Sigmoid colon (tissue), 7 donors: ENCODE measurements at regions of chr6 and their contacts with region 1.

Region 1: DNA sequence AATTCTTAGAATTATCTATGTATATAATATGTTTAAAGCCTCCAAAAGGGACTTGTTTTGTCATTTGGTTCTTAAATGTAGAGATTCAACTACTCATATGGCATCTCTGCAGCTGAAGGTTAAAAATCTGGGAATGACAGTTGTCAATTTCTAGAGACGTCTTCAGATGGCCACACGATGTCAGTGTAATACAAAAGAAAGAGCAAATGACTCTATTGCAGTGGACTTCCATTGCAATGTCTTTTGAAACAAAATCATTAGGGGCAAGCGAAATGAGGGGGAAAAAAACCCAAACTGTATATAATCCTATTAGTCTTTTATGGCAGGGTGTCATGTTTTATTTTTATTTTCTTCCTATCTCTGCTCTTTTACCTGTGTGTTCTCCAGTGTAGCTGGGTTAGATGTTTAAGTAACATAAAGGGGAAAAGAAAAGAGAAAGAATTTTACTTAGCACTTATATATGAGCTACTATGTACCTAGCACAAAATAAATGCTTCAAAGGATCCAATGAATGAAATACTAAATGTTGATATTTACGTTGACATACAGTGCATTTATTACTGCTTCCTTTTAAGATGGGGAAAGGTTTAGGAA is 26.2 kb downstream of the CCN2 start:
- DNase-seq: no peak
- H3K4me3 ChIP-seq: no peak overlapping the region
- H3K27ac ChIP-seq: no peak overlapping the region
- H3K4me1 ChIP-seq: no peaks in the 10 kb centered on the region
- H3K27me3 ChIP-seq: no peaks in the 10 kb centered on the region
- CTCF ChIP-seq: peak in 2 of 4 experiments; percentile 30 to 53
- EP300 ChIP-seq: no peak
- POLR2A ChIP-seq: no peak

Region 2: DNA sequence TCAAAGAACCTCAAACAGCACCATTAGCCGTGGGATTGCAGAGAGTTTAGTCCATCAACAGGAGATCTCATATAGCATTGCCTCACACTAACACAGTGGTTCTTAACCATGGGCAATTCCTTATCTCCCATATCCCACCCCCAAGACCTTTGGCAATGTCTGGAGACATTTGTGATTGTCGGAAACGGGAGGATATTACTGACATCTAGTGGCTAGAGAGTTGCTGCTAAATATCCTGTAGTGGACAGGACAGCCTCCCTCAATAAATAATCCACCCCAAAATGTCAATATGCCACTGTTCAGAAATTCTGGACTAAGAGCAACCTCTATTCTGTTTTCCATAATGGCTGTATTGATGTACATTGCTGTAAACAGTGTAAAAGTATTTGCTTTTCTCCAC is 236.3 kb after region 1 on chr6:
- intact Hi-C with region 1: loop called (anchors 2 kb)
- DNase-seq: no peak
- H3K4me3 ChIP-seq: no peak overlapping the region
- H3K27ac ChIP-seq: no peak overlapping the region
- H3K4me1 ChIP-seq: peaks cover 0 to 4% (median 0%) of the 10 kb centered on the region in 4 donors
- H3K27me3 ChIP-seq: no peaks in the 10 kb centered on the region
- CTCF ChIP-seq: peak in 3 of 4 experiments; percentile 30 to 52 (median 35)
- EP300 ChIP-seq: no peak
- POLR2A ChIP-seq: no peak